B cell (primary cell): ENCODE measurements at regions of chr22 and their contacts with region 1.

Region 1: GRCh38 chr22:17158568-17159503 is at the start of gene HDHD5:
- DNase-seq: peak; percentile 93
- ATAC-seq: peak; percentile 92
- H3K4me3 ChIP-seq: peak within 1 kb of the TSS; percentile 30 to 92 (median 84)
- H3K4me3 Mint-ChIP-seq: peak within 1 kb of the TSS; percentile 88
- H3K27ac ChIP-seq: peak within 1 kb of the TSS; percentile 38 to 75
- H3K27ac Mint-ChIP-seq: peak within 1 kb of the TSS; percentile 75
- H3K4me1 ChIP-seq: peaks cover 12 to 21% of the 10 kb centered on the region in 2 donors
- H3K4me1 Mint-ChIP-seq: peaks cover 21% of the 10 kb centered on the region
- H3K27me3 ChIP-seq: no peaks in the 10 kb centered on the region
- H3K27me3 Mint-ChIP-seq: no peaks in the 10 kb centered on the region
- CTCF ChIP-seq: no peak
- total RNA-seq, gene HDHD5: 17.7 and 23.3 TPM in 2 replicates

Region 2: DNA sequence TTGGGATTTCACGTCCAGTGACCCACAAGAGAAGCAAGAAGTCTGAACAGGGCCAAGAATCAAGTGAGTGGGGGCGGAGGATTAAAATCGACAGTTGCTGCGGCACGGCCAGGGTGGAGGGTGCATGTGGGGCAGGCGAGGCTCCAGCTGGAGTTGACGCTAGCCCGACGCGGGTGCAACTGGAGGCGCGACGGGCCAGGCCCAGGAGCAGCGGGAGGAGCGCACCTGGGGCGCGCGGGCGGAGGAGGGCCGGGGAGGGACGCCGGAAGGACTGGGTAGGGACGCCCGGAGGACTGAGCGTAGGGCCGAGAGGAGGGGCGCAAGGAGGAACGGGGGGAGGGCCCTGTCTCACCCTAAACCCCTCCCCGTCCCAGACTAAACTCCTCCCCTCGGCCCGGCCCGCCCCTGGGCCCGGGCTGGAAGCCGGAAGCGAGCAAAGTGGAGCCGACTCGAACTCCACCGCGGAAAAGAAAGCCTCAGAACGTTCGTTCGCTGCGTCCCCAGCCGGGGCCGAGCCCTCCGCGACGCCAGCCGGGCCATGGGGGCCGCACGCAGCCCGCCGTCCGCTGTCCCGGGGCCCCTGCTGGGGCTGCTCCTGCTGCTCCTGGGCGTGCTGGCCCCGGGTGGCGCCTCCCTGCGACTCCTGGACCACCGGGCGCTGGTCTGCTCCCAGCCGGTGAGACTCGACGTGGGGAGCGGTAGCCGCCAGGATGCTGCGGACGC is 74.1 kb before region 1 on chr22 and contains the start of gene IL17RA:
- CTCF ChIA-PET with region 1: interaction called, 3 read pairs
- POLR2A ChIA-PET with region 1: interaction called, 5 read pairs
- intact Hi-C with region 1: loop called (anchors 1 kb)
- DNase-seq: peak; percentile 93
- ATAC-seq: peak; percentile 99
- H3K4me3 ChIP-seq: peak within 1 kb of the TSS; percentile 65 to 97 (median 81)
- H3K4me3 Mint-ChIP-seq: peak within 1 kb of the TSS; percentile 95
- H3K27ac ChIP-seq: peak within 1 kb of the TSS; percentile 26 to 80
- H3K27ac Mint-ChIP-seq: peak within 1 kb of the TSS; percentile 95
- H3K4me1 ChIP-seq: peaks cover 25 to 36% of the 10 kb centered on the region in 2 donors
- H3K4me1 Mint-ChIP-seq: peaks cover 36% of the 10 kb centered on the region
- H3K27me3 ChIP-seq: no peaks in the 10 kb centered on the region
- H3K27me3 Mint-ChIP-seq: no peaks in the 10 kb centered on the region
- CTCF ChIP-seq: no peak
- total RNA-seq, gene IL17RA: 22.4 and 24.6 TPM in 2 replicates

Region 3: DNA sequence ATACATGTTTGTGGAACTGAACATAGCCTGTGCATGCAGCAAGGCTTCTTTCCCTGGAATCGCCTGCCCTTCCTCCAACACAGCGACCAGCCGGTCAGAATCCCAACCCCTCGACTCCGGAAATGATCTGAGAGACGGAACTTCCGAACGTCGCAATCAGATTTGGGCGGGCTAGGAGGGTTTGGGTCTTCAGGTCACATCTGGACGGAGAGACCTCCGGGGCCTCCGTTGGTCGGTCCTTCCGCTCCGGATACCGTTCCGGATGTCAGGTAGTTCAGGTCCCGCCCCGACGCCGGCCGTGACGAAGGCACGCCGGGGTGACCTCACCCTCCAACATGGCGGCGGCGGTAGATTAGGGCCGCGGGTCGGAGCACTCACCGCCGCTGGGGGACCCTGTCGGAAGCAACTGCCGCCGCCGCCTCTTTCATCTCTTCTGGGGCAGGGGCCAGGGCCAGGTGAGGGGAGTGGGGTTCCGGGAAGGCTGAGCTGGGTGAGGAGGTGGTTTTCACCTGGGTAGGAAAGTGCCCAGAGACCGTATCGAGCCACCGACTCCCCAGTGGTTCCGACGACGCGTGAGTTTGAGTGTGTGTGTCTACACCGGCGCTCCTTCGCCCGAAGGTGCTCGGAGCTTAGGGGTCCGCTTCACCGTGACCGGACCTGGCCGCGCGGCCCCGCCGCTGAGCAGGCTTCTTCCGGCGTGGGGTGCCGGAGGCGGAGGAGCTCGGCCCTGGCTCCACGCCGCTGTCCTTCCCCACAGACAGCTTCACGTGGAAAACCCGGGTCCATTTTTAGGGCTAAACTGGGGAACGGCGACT is 479.8 kb after region 1 on chr22 and contains the start of gene BCL2L13:
- CTCF ChIA-PET with region 1: no interaction called
- POLR2A ChIA-PET with region 1: no interaction called
- intact Hi-C with region 1: loop called (anchors 2 kb)
- DNase-seq: peak; percentile 94
- ATAC-seq: peak; percentile 94
- H3K4me3 ChIP-seq: peak within 1 kb of the TSS; percentile 67 to 100 (median 81)
- H3K4me3 Mint-ChIP-seq: peak within 1 kb of the TSS; percentile 96
- H3K27ac ChIP-seq: peak within 1 kb of the TSS; percentile 100
- H3K27ac Mint-ChIP-seq: peak within 1 kb of the TSS; percentile 97
- H3K4me1 ChIP-seq: peaks cover 15 to 20% of the 10 kb centered on the region in 2 donors
- H3K4me1 Mint-ChIP-seq: peaks cover 28% of the 10 kb centered on the region
- H3K27me3 ChIP-seq: no peaks in the 10 kb centered on the region
- H3K27me3 Mint-ChIP-seq: no peaks in the 10 kb centered on the region
- CTCF ChIP-seq: no peak
- total RNA-seq, gene BCL2L13: 29.9 and 37.2 TPM in 2 replicates